ENCODE measurements at regions of chrX and their contacts with region 1.

Region 1: DNA sequence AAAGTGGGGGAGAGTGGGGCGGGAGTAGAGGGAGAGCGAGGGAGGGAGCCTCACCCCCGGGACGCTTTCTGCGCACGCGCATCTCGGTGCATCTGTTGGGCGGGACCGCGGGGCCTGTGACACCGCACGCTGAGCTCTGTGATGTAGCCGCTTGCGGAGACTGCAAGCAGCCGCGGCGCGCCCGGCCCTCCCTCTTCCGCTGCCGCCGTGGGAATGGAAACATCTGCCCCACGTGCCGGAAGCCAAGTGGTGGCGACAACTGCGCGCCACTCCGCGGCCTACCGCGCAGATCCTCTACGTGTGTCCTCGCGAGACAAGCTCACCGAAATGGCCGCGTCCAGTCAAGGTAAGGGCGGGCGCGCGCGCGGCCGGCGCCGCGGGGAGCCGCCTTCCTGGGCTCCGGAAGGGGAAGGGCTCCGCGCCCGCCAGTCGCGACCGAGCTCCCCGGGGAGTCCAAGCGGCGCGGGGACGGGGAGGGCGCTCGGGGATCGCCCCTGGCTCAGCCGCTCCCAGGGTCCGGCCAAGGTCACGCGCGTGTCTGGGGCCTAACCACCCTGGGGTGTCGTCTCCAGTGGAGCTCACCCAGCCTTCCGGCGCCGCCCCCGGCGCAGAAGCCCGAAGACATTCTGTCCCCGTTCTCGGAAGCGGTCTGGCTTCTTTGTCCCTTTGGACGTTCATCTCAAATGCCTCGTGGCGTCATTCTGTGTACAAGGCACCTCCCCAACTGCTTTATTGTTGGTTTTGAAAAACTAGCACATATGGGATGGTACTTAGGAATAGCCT is at the start of gene FUNDC2:
- DNase-seq: peak; percentile 89 to 95
- ATAC-seq: peak; percentile 80 to 83
- H3K4me3 ChIP-seq: peak within 1 kb of the TSS; percentile 61 to 72 (median 64)
- H3K27ac ChIP-seq: peak within 1 kb of the TSS; percentile 88 to 98 (median 94)
- H3K4me1 ChIP-seq: peaks cover 3 to 16% of the 10 kb centered on the region in 2 donors
- H3K27me3 ChIP-seq: no peaks in the 10 kb centered on the region
- CTCF ChIP-seq: no peak
- POLR2A ChIP-seq: peak; percentile 74
- total RNA-seq, gene FUNDC2: 141 to 267 (median 183) TPM

Region 2: GRCh38 chrX:154471839-154472687 is 554.9 kb before region 1 on chrX:
- in situ Hi-C with region 1: no loop called
- intact Hi-C with region 1: no loop called
- DNase-seq: no peak
- ATAC-seq: no peak
- H3K4me3 ChIP-seq: no peak overlapping the region
- H3K27ac ChIP-seq: no peak overlapping the region
- H3K4me1 ChIP-seq: no peaks in the 10 kb centered on the region
- H3K27me3 ChIP-seq: no peaks in the 10 kb centered on the region
- CTCF ChIP-seq: no peak
- POLR2A ChIP-seq: no peak

Region 3: DNA sequence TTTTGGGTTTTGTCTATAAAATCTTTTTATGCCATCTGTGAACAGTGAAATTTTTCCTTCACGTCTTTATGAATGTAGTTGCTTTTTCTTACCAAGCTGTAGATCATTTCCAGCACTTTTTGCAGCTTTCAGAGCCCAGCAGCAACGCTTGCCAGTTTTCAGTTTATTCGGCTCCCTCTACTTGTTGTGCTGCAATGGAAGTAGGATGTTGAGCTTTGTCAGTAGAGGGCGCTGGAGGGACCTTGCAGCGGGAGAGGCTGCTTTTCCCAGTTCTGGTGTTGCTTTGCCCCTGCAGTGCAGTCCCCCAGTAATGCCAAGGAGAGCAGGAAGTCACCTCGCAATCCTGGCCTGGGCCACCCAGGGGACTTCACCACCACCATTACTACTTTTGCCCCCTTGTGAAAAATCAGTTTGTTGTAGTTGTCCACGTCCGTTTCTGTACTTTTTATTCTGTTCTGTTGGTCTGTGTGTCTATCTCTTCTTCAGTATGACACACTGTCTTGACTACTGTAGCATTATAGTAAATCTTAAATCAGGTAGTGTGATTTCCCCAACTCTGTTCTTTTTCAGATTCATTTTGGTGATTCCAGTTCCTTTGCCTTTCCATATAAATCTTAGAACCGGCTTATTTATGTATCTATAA is 22.2 kb after region 1 on chrX:
- in situ Hi-C with region 1: no loop called
- intact Hi-C with region 1: loop called (anchors 2 kb)
- DNase-seq: peak in 1 of 2 donors; percentile 50
- ATAC-seq: peak; percentile 30 to 42
- H3K4me3 ChIP-seq: no peak overlapping the region
- H3K27ac ChIP-seq: peak overlapping the region; percentile 67 to 78 (median 76)
- H3K4me1 ChIP-seq: peaks cover 13 to 24% of the 10 kb centered on the region in 2 donors
- H3K27me3 ChIP-seq: no peaks in the 10 kb centered on the region
- CTCF ChIP-seq: peak; percentile 22 to 62 (median 41)
- POLR2A ChIP-seq: no peak

Region 4: DNA sequence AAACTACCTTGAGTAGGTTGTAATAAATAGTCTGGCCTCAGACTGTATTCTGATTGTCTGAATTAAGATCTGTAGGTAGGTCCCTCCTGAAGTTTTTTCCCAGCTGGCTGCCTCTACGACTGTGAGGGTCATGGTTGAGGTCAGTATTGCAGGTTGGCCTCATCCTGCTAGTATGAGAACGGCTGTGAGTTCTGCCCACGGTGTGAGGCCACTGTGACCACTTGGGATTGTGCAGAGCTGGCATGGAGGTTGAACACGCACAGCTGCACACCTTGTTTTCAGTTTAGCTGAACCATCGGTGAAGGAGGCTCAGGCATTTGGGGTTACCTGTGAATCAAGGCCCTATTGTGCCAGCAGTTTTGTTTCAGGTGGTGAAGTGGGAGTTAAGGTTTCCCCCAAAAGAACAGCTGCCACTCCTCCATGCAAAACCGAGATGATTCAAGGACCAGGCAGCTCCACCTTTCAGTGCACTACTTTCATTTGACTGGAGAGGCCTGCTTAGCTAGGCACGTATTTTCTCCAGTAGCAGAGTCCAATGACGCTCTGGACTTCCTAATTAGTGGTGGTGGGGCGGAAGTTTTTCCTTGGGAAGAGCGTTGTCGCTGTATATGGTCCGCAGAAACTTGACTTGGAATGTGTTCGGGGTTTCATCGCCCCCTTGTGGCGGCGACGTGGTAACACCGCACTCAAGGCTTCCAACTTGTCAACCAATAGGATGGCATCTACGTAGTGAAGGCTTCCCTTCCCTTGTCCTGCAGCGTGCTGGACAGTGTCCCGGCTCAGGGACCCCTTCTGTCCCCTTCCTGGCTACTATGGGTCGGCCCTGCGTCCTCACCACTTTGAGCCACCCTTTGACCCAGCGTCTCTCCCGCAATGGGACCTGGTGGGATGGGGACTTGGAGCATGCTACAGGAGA is 30.2 kb after region 1 on chrX:
- in situ Hi-C with region 1: no loop called
- intact Hi-C with region 1: loop called (anchors 2 kb)
- DNase-seq: peak; percentile 6 to 57
- ATAC-seq: peak; percentile 95 to 98
- H3K4me3 ChIP-seq: no peak overlapping the region
- H3K27ac ChIP-seq: peak overlapping the region; percentile 17 to 62 (median 47)
- H3K4me1 ChIP-seq: no peaks in the 10 kb centered on the region
- H3K27me3 ChIP-seq: no peaks in the 10 kb centered on the region
- CTCF ChIP-seq: peak; percentile 49 to 76 (median 74)
- POLR2A ChIP-seq: no peak

Region 5: GRCh38 chrX:155070975-155071693 is 44.2 kb after region 1 on chrX and contains the starts of genes BRCC3, CMC4 and MTCP1:
- in situ Hi-C with region 1: no loop called
- intact Hi-C with region 1: loop called (anchors 5 kb)
- DNase-seq: peak; percentile 65 to 76
- ATAC-seq: peak; percentile 83 to 88
- H3K4me3 ChIP-seq: peak within 1 kb of the TSS; percentile 59 to 79 (median 74)
- H3K27ac ChIP-seq: peak within 1 kb of the TSS; percentile 87 to 93 (median 88)
- H3K4me1 ChIP-seq: peaks cover 5 to 16% of the 10 kb centered on the region in 2 donors
- H3K27me3 ChIP-seq: no peaks in the 10 kb centered on the region
- CTCF ChIP-seq: peak in 1 of 5 experiments; percentile 7
- POLR2A ChIP-seq: peak; percentile 69 to 76
- total RNA-seq, gene BRCC3: 8.8 to 15.9 (median 10.6) TPM
- total RNA-seq, gene CMC4: 13.0 to 32.1 (median 26.3) TPM
- total RNA-seq, gene MTCP1: 0.31 to 2.2 (median 0.93) TPM in 3 of 4 donors, not detected in the other

Region 6: DNA sequence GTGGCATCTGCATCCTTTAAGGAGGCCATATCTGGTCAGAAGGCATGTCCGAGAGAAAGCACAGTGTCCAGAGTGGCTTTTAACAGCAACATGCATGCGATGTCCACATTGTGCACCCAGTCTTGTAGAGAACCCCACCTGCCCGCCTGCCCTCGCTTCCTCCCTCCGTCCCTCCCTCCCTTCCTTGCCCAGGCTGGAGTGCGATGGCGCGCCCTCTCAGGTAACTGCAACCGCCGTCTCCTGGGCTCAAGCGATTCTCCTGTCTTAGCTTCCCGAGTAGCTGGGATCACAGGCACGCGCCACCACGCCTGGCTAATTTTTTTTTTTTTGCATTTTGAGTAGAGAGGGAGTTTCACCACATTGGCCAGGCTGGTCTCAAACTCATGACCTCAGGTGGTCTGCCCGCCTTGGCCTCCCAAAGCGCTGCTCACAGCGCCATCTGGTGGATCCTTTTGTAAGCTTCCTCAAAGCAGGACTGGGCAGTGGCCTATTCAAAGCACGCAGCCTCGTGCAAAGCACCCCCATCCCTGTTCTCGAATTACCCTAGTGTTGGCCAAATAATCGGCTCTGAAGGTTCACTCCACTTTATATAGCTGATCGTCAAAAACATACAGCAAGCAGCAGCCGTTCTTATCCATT is 59.4 kb after region 1 on chrX:
- in situ Hi-C with region 1: no loop called
- intact Hi-C with region 1: no loop called
- DNase-seq: peak in 1 of 2 donors; percentile 17
- ATAC-seq: peak in 1 of 2 donors; percentile 46
- H3K4me3 ChIP-seq: no peak overlapping the region
- H3K27ac ChIP-seq: no peak overlapping the region
- H3K4me1 ChIP-seq: no peaks in the 10 kb centered on the region
- H3K27me3 ChIP-seq: no peaks in the 10 kb centered on the region
- CTCF ChIP-seq: peak; percentile 17 to 56 (median 38)
- POLR2A ChIP-seq: no peak

Region 7: GRCh38 chrX:155231163-155231562 is 204.2 kb after region 1 on chrX:
- in situ Hi-C with region 1: no loop called
- intact Hi-C with region 1: no loop called
- DNase-seq: no peak
- ATAC-seq: no peak
- H3K4me3 ChIP-seq: no peak overlapping the region
- H3K27ac ChIP-seq: no peak overlapping the region
- H3K4me1 ChIP-seq: peaks cover 3 to 17% of the 10 kb centered on the region in 2 donors
- H3K27me3 ChIP-seq: no peaks in the 10 kb centered on the region
- CTCF ChIP-seq: no peak
- POLR2A ChIP-seq: no peak

Measured in gastrocnemius medialis (tissue), 4 donors.